ENCODE measurements at regions of chr15 and their contacts with region 1.

Region 1: GRCh38 chr15:79596051-79596507 is 163.9 kb downstream of the MINAR1 start:
- ATAC-seq: peak; percentile 32 to 100 (median 62)
- H3K4me3 ChIP-seq: no peak overlapping the region
- H3K27ac ChIP-seq: no peak overlapping the region
- H3K4me1 ChIP-seq: peaks cover 7 to 11% of the 10 kb centered on the region in 2 donors

Region 2: GRCh38 chr15:79380755-79381497 is 215.2 kb before region 1 on chr15:
- in situ Hi-C with region 1: loop called in 1 of 9 experiments (anchors 10 kb)
- ATAC-seq: peak; percentile 93 to 100 (median 98)
- H3K4me3 ChIP-seq: no peak overlapping the region
- H3K27ac ChIP-seq: no peak overlapping the region
- H3K4me1 ChIP-seq: no peaks in the 10 kb centered on the region

Region 3: DNA sequence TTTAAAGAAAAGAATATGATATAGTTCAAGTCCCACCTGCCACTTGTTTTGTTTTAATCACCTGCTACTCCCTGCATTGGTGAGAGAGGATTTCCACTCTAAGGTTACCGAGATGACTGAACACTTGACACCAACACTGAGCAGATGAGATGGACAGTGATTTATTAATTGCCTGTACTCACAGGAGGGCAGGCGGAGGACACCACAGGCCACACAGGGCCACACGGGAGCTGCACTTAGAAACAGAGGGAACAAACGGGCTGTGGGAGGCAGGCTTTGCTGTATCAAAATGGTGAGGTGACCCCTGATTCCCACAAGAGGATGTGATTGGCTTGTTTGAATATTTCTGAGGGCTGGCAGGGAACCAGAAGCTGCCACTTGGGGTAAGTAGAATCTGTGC is 153.2 kb before region 1 on chr15:
- in situ Hi-C with region 1: loop called in 1 of 9 experiments (anchors 10 kb)
- ATAC-seq: peak in 4 of 8 experiments; percentile 18 to 76 (median 50)
- H3K4me3 ChIP-seq: no peak overlapping the region
- H3K27ac ChIP-seq: no peak overlapping the region
- H3K4me1 ChIP-seq: peaks cover 0 to 3% of the 10 kb centered on the region in 2 donors

Region 4: GRCh38 chr15:79540558-79540957 is 55.5 kb before region 1 on chr15:
- in situ Hi-C with region 1: no loop called
- ATAC-seq: no peak
- H3K4me3 ChIP-seq: no peak overlapping the region
- H3K27ac ChIP-seq: no peak overlapping the region
- H3K4me1 ChIP-seq: no peaks in the 10 kb centered on the region

Region 5: DNA sequence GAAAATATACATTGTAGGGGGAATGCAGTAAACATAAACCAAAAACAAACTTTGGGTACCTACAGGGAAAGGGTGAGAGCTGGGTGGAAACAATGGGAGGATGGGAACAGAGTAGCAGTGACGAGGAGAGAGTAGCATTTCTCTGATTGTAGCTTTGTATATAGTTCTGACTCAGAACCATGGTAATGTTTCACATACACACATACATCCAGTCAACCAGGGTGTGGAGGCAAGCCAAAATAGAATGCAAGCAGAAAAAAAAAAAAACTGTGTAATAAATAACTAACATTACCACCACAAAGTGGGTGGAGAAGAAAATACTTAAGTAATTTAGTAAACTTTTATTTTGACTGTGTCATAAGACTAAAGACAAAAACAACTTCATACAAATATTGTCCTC is 347.7 kb after region 1 on chr15:
- in situ Hi-C with region 1: no loop called
- ATAC-seq: peak in 3 of 8 experiments; percentile 62 to 99 (median 97)
- H3K4me3 ChIP-seq: no peak overlapping the region
- H3K27ac ChIP-seq: no peak overlapping the region
- H3K4me1 ChIP-seq: no peaks in the 10 kb centered on the region